Activated T-helper 2 cell treated with anti-CD3 and anti-CD28 coated beads, Interferon-gamma antibody, Interleukin-2, Interleukin-4, amounts not matched to agents 10 μg/mL and 5 μg/mL and 100 μg/mL, durations not matched to agents 14 hours and 24 hours and 36 hours (primary cell): ENCODE measurements at regions of chr6 and their contacts with region 1.

Region 1: GRCh38 chr6:146700078-146700686 is 101.4 kb downstream of the ADGB start:
- DNase-seq: no peak
- H3K4me3 Mint-ChIP-seq: no peak overlapping the region
- H3K27ac Mint-ChIP-seq: no peak overlapping the region
- H3K4me1 Mint-ChIP-seq: no peaks in the 10 kb centered on the region
- H3K27me3 Mint-ChIP-seq: peaks cover 9% of the 10 kb centered on the region

Region 2: GRCh38 chr6:145929037-145929633 is 771.0 kb before region 1 on chr6:
- intact Hi-C with region 1: loop called (anchors 2 kb)
- DNase-seq: no peak
- H3K4me3 Mint-ChIP-seq: no peak overlapping the region
- H3K27ac Mint-ChIP-seq: no peak overlapping the region
- H3K4me1 Mint-ChIP-seq: peaks cover 2% of the 10 kb centered on the region
- H3K27me3 Mint-ChIP-seq: no peaks in the 10 kb centered on the region

Region 3: DNA sequence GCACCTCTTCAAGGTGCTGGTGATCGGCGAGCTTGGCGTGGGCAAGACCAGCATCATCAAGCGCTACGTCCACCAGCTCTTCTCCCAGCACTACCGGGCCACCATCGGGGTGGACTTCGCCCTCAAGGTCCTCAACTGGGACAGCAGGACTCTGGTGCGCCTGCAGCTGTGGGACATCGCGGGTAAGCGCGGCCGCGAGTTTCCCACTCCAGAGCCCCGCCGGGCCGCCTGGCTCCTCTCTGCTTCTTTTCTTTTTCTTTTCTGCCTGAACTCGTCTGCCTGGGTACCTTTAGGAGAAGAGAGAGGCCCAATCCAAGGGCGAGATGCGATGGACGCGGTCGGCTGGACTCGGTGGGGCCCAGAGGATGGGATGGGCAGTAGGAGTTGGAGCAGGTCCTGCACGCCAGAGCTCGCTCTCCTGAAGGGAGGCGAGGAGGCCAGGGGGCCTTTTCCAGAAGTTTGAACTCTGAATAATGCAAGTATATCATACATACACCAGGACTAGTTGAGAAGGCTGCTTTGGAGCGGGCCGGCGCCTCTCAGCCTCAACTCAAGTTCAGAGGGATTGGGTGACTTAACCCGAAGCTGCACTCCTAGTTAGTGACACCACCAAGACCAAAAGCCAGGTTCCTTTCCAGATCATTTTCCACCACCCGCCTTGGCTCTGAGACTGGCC is 156.1 kb before region 1 on chr6:
- intact Hi-C with region 1: loop called (anchors 2 kb)
- DNase-seq: no peak
- H3K4me3 Mint-ChIP-seq: peak overlapping the region; percentile 80
- H3K27ac Mint-ChIP-seq: peak overlapping the region; percentile 55
- H3K4me1 Mint-ChIP-seq: peaks cover 8% of the 10 kb centered on the region
- H3K27me3 Mint-ChIP-seq: peaks cover 38% of the 10 kb centered on the region

Region 4: GRCh38 chr6:146560607-146561006 is 139.6 kb before region 1 on chr6:
- intact Hi-C with region 1: no loop called
- DNase-seq: no peak
- H3K4me3 Mint-ChIP-seq: no peak overlapping the region
- H3K27ac Mint-ChIP-seq: no peak overlapping the region
- H3K4me1 Mint-ChIP-seq: no peaks in the 10 kb centered on the region
- H3K27me3 Mint-ChIP-seq: no peaks in the 10 kb centered on the region